Activated naive CD4-positive, alpha-beta T cell treated with anti-CD3 and anti-CD28 coated beads for 36 hours (primary cell): ENCODE measurements at regions of chr1 and their contacts with region 1.

Region 1: GRCh38 chr1:148388260-148389027 is 94.7 kb downstream of the PPIAL4G start:
- DNase-seq: peak; percentile 96
- H3K4me3 Mint-ChIP-seq: peak overlapping the region; percentile 89
- H3K27ac Mint-ChIP-seq: peak overlapping the region; percentile 99
- H3K4me1 Mint-ChIP-seq: peaks cover 37% of the 10 kb centered on the region
- H3K27me3 Mint-ChIP-seq: no peaks in the 10 kb centered on the region

Region 2: DNA sequence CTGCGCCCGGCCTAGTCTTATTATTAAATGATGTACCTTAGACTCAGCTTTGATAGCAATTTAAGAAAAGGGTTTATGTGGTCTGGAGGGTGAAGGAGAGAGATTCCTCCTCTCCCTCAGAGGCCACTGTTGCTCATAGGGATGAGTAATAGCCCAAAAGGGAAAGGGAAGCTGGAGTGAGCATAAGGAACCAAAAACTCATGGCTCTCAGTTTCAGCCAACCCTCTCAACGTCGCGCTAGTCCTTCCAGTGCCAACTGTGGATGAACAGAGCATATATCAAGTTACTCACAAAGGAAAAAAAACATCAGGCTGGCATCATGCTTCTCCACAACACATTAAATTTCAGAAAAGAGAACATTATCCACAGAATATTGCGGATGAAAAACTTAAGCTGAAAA is 468.5 kb before region 1 on chr1:
- CTCF ChIA-PET with region 1: no interaction called
- intact Hi-C with region 1: no loop called
- DNase-seq: no peak
- H3K4me3 Mint-ChIP-seq: no peak overlapping the region
- H3K27ac Mint-ChIP-seq: no peak overlapping the region
- H3K4me1 Mint-ChIP-seq: peaks cover 4% of the 10 kb centered on the region
- H3K27me3 Mint-ChIP-seq: peaks cover 6% of the 10 kb centered on the region

Region 3: DNA sequence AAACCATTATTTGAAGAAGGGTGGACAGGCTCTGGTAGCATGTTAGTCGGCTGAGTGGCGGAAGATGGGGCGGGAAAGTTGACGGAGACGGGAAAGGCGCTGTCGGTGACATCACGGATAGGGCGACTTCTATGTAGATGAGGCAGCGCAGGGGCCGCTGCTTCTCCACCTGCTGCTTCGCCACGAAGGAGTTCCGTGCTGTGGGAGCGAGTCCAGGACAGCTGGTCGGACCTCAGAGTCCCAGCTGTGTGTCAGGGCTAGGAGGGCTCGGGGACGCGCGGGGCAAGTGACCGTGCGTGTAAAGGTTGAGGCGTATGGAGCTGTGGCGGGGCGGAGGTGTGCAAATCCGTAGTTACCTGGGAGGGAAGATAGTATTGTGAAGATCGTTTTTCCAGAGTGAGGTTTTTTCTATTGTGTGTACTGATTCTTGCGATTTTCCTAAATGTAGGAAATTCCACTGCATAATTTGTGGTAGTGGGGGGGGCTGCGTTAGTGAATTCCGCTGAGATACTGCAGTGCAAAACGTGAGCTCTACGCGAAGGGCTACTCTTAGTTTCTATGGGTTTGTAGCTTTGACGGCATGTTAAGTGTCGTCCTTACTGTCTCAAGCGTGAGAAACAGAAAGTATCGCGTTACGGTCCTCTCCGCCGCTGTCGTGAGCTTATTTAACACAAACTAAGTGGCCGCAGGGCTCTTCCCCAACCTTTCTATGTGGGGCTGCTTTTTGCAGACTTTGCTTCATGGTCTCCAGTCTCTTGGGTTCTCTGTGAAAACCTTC is 125.1 kb before region 1 on chr1:
- CTCF ChIA-PET with region 1: no interaction called
- intact Hi-C with region 1: loop called (anchors 1 kb)
- DNase-seq: peak; percentile 89
- H3K4me3 Mint-ChIP-seq: peak overlapping the region; percentile 84
- H3K27ac Mint-ChIP-seq: peak overlapping the region; percentile 98
- H3K4me1 Mint-ChIP-seq: peaks cover 14% of the 10 kb centered on the region
- H3K27me3 Mint-ChIP-seq: peaks cover 3% of the 10 kb centered on the region

Region 4: DNA sequence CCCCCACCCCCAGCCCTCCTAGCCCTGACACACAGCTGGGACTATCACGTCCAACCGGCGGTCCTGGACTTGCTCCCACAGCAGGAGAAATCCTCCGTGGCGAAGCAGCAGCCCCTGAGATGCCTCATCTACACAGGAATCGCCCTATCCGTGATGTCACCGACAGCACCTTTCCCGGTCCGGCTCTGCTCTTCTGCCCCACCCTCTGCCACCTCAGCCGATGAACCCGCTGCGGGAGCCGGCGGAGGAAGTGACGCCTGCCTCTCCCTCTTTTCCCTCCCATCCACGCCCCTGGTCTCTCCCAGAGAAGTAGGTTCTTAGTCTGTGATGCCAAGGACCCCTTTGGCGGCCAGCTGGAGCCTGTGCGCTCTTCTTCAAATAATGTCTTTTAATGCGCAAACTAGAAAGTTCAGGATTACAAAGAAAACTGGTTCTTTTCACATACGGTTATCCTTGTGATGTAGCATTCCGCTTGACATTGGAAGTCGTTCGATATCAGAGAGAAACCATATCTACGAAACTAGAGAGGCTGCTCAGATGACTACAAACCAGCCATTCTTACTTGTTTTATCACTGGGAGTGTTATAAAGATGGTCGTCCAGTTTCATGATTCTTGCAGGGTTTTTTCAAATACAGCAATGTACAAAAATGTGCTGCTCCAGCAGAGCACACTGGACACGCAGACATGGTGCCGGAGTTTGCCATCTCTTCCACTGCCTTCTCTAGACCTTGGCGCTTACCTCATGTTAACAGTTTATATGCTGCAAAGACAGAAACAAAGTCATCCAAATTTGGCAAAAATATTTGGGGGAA is 25.6 kb before region 1 on chr1:
- CTCF ChIA-PET with region 1: no interaction called
- intact Hi-C with region 1: loop called (anchors 1 kb)
- DNase-seq: peak; percentile 78
- H3K4me3 Mint-ChIP-seq: peak overlapping the region; percentile 78
- H3K27ac Mint-ChIP-seq: peak overlapping the region; percentile 82
- H3K4me1 Mint-ChIP-seq: peaks cover 43% of the 10 kb centered on the region
- H3K27me3 Mint-ChIP-seq: no peaks in the 10 kb centered on the region

Region 5: GRCh38 chr1:148372731-148373130 is 15.7 kb before region 1 on chr1:
- CTCF ChIA-PET with region 1: interaction called, 4 read pairs
- intact Hi-C with region 1: loop called (anchors 1 kb)
- DNase-seq: peak; percentile 82
- H3K4me3 Mint-ChIP-seq: peak overlapping the region; percentile 75
- H3K27ac Mint-ChIP-seq: peak overlapping the region; percentile 98
- H3K4me1 Mint-ChIP-seq: peaks cover 55% of the 10 kb centered on the region
- H3K27me3 Mint-ChIP-seq: no peaks in the 10 kb centered on the region